ENCODE measurements at regions of chr6 and their contacts with region 1.

Region 1: GRCh38 chr6:112282221-112282620 is 27.9 kb upstream of the LAMA4 start:
- DNase-seq: no peak
- ATAC-seq: no peak
- H3K4me3 ChIP-seq: no peak overlapping the region
- H3K4me3 Mint-ChIP-seq: no peak overlapping the region
- H3K27ac ChIP-seq: no peak overlapping the region
- H3K27ac Mint-ChIP-seq: no peak overlapping the region
- H3K4me1 ChIP-seq: peaks cover 0 to 17% of the 10 kb centered on the region in 2 donors
- H3K4me1 Mint-ChIP-seq: peaks cover 0 to 16% (median 9%) of the 10 kb centered on the region in 7 donors
- H3K27me3 ChIP-seq: no peaks in the 10 kb centered on the region
- H3K27me3 Mint-ChIP-seq: peaks cover 20 to 73% (median 42%) of the 10 kb centered on the region in 5 donors

Region 2: GRCh38 chr6:112029045-112029822 is 253.0 kb before region 1 on chr6:
- CTCF ChIA-PET with region 1: no interaction called
- POLR2A ChIA-PET with region 1: no interaction called
- intact Hi-C with region 1: no loop called
- DNase-seq: peak in 7 of 9 donors; percentile 22 to 58 (median 43)
- ATAC-seq: no peak
- H3K4me3 ChIP-seq: no peak overlapping the region
- H3K4me3 Mint-ChIP-seq: peak overlapping the region; percentile 49 to 83 (median 68)
- H3K27ac ChIP-seq: peak overlapping the region; percentile 90
- H3K27ac Mint-ChIP-seq: peak overlapping the region; percentile 95 to 100 (median 98)
- H3K4me1 ChIP-seq: peaks cover 34 to 74% of the 10 kb centered on the region in 2 donors
- H3K4me1 Mint-ChIP-seq: peaks cover 46 to 94% (median 84%) of the 10 kb centered on the region in 7 donors
- H3K27me3 ChIP-seq: no peaks in the 10 kb centered on the region
- H3K27me3 Mint-ChIP-seq: peaks cover 0 to 3% (median 0%) of the 10 kb centered on the region in 5 donors

Region 3: DNA sequence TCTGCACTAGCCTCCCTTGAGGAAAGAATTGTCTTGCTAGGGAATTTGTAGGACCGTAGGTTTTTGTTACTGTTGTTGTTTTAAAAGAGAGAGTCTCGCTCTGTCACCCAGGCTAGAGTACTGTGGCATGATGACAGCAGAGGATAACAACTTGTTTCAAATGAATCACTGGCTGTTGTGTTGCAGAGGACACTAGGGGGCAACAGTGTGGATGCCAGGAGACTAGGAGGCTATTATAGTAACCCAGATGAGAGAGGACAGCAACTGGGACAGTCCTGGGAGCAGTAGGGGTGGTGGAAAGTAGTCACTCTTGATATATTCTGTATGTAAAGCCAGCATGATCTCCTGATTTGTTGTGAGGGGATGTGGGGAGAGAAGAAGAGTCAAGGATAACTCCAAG is 13.9 kb after region 1 on chr6:
- CTCF ChIA-PET with region 1: interaction called, 5 read pairs
- POLR2A ChIA-PET with region 1: no interaction called
- intact Hi-C with region 1: loop called in 1 of 2 experiments (anchors 2 kb)
- DNase-seq: no peak
- ATAC-seq: peak; percentile 10
- H3K4me3 ChIP-seq: no peak overlapping the region
- H3K4me3 Mint-ChIP-seq: no peak overlapping the region
- H3K27ac ChIP-seq: no peak overlapping the region
- H3K27ac Mint-ChIP-seq: no peak overlapping the region
- H3K4me1 ChIP-seq: no peaks in the 10 kb centered on the region
- H3K4me1 Mint-ChIP-seq: no peaks in the 10 kb centered on the region
- H3K27me3 ChIP-seq: peaks cover 0 to 2% of the 10 kb centered on the region in 2 donors
- H3K27me3 Mint-ChIP-seq: peaks cover 23 to 66% (median 36%) of the 10 kb centered on the region in 5 donors

Measured in naive thymus-derived CD4-positive, alpha-beta T cell (primary cell).